ENCODE measurements at regions of chr18 and their contacts with region 1.

Region 1: DNA sequence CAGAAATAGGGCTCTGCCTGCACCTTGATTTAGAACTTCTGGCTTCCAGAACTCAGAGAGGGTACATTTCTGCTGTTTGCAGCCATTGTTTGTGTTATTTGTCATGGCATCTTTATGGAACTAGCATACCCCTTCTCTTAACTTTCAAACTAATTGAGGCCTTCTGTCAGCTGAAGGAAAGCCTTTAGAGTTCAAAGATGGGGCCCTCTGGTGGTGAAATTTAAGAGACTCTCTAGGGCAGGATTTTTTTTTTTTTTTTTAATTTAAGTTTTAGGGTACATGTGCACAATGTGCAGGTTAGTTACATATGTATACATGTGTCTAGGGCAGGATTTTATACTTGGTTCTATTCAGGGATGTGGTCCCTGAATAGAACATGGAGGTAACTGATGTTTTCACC is 260.6 kb upstream of the LINC00305 start:
- DNase-seq: no peak
- ATAC-seq: peak; percentile 81
- H3K4me3 ChIP-seq: no peak overlapping the region
- H3K27ac ChIP-seq: no peak overlapping the region
- H3K4me1 ChIP-seq: no peaks in the 10 kb centered on the region
- H3K27me3 ChIP-seq: no peaks in the 10 kb centered on the region
- CTCF ChIP-seq: peak; percentile 39 to 42 (median 41)
- EP300 ChIP-seq: no peak
- POLR2A ChIP-seq: no peak
- RAD21 ChIP-seq: peak; percentile 58

Region 2: GRCh38 chr18:64011513-64011912 is 398.0 kb before region 1 on chr18:
- CTCF ChIA-PET with region 1: interaction called, 11 read pairs
- POLR2A ChIA-PET with region 1: no interaction called
- RAD21 ChIA-PET with region 1: interaction called, 3 read pairs
- SMC1A ChIA-PET with region 1: interaction called, 4 read pairs
- in situ Hi-C with region 1: no loop called
- intact Hi-C with region 1: no loop called
- DNase-seq: no peak
- ATAC-seq: no peak
- H3K4me3 ChIP-seq: no peak overlapping the region
- H3K27ac ChIP-seq: no peak overlapping the region
- H3K4me1 ChIP-seq: no peaks in the 10 kb centered on the region
- H3K27me3 ChIP-seq: no peaks in the 10 kb centered on the region; a peak in 1 of 4 replicates
- CTCF ChIP-seq: no peak
- EP300 ChIP-seq: no peak
- POLR2A ChIP-seq: no peak
- RAD21 ChIP-seq: no peak

Region 3: GRCh38 chr18:64027931-64028695 is 381.4 kb before region 1 on chr18:
- CTCF ChIA-PET with region 1: interaction called, 12 read pairs
- POLR2A ChIA-PET with region 1: no interaction called
- RAD21 ChIA-PET with region 1: no interaction called
- SMC1A ChIA-PET with region 1: interaction called, 14 read pairs
- in situ Hi-C with region 1: no loop called
- intact Hi-C with region 1: no loop called
- DNase-seq: peak; percentile 45
- ATAC-seq: peak; percentile 88
- H3K4me3 ChIP-seq: no peak overlapping the region
- H3K27ac ChIP-seq: peak overlapping the region; percentile 39; the same call in 1 of the 2 replicates
- H3K4me1 ChIP-seq: peaks cover 9% of the 10 kb centered on the region; the same call in 1 of the 2 replicates
- H3K27me3 ChIP-seq: no peaks in the 10 kb centered on the region; a peak in 1 of 4 replicates
- CTCF ChIP-seq: no peak
- EP300 ChIP-seq: no peak; a peak in 1 of 4 replicates
- POLR2A ChIP-seq: no peak
- RAD21 ChIP-seq: no peak

Region 4: GRCh38 chr18:64100116-64100922 is 309.2 kb before region 1 on chr18:
- CTCF ChIA-PET with region 1: interaction called, 32 read pairs
- POLR2A ChIA-PET with region 1: no interaction called
- RAD21 ChIA-PET with region 1: interaction called, 10 read pairs
- SMC1A ChIA-PET with region 1: interaction called, 31 read pairs
- in situ Hi-C with region 1: no loop called
- intact Hi-C with region 1: loop called (anchors 1 kb)
- DNase-seq: peak; percentile 33
- ATAC-seq: peak; percentile 74
- H3K4me3 ChIP-seq: no peak overlapping the region
- H3K27ac ChIP-seq: no peak overlapping the region
- H3K4me1 ChIP-seq: no peaks in the 10 kb centered on the region; the same call in 1 of the 2 replicates
- H3K27me3 ChIP-seq: no peaks in the 10 kb centered on the region
- CTCF ChIP-seq: no peak
- EP300 ChIP-seq: 0 out of 4 replicates have a peak, but pooled peaks of 1 of the 2 experiments have one; percentile 8
- POLR2A ChIP-seq: no peak
- RAD21 ChIP-seq: no peak

Region 5: GRCh38 chr18:64330161-64330560 is 79.3 kb before region 1 on chr18:
- CTCF ChIA-PET with region 1: interaction called, 12 read pairs
- POLR2A ChIA-PET with region 1: no interaction called
- RAD21 ChIA-PET with region 1: interaction called, 3 read pairs
- SMC1A ChIA-PET with region 1: interaction called, 11 read pairs
- in situ Hi-C with region 1: no loop called
- intact Hi-C with region 1: loop called (anchors 5 kb)
- DNase-seq: no peak
- ATAC-seq: peak; percentile 90
- H3K4me3 ChIP-seq: no peak overlapping the region
- H3K27ac ChIP-seq: no peak overlapping the region
- H3K4me1 ChIP-seq: no peaks in the 10 kb centered on the region
- H3K27me3 ChIP-seq: no peaks in the 10 kb centered on the region
- CTCF ChIP-seq: peak in 2 of 3 experiments; percentile 19 to 38; a peak in 3 of 6 replicates
- EP300 ChIP-seq: no peak
- POLR2A ChIP-seq: no peak
- RAD21 ChIP-seq: peak; percentile 60

Region 6: DNA sequence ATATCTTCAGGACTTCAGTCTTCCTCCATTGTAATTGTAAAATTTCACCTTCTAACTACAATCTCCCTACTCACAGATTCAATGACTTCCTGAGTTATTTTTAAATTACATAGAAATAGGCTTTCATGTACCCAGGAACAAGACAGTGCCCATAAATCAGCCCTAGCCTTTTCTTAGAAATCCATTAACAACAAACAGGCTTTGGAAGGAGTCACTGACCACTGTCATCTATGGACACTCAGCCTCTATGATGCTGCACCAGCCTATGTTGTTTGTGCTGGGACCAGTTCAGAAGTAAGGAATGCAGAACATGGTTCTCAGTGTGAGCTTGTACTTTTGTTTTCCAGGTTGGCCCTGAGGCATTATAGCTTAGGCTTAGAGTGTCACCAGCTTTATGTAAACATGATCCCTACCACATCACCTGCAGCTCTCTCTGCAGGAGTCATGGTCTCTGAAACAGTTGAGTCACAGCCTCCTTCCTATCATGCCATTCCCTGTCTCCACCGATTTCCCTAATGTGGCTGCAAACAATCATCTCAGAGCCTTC is 1005.6 kb after region 1 on chr18:
- CTCF ChIA-PET with region 1: no interaction called
- POLR2A ChIA-PET with region 1: no interaction called
- RAD21 ChIA-PET with region 1: no interaction called
- SMC1A ChIA-PET with region 1: no interaction called
- in situ Hi-C with region 1: no loop called
- intact Hi-C with region 1: no loop called
- DNase-seq: no peak
- ATAC-seq: no peak
- H3K4me3 ChIP-seq: no peak overlapping the region
- H3K27ac ChIP-seq: no peak overlapping the region
- H3K4me1 ChIP-seq: no peaks in the 10 kb centered on the region
- H3K27me3 ChIP-seq: no peaks in the 10 kb centered on the region
- CTCF ChIP-seq: no peak
- EP300 ChIP-seq: no peak
- POLR2A ChIP-seq: no peak
- RAD21 ChIP-seq: no peak

Measured in GM12878 (cell line).